Right ventricle myocardium inferior (tissue), 1 donor: ENCODE measurements at regions of chr20 and their contacts with region 1.

Region 1: GRCh38 chr20:53547664-53548239 is 45.9 kb downstream of the ZNF217 start:
- DNase-seq: no peak
- ATAC-seq: peak; percentile 28

Region 2: DNA sequence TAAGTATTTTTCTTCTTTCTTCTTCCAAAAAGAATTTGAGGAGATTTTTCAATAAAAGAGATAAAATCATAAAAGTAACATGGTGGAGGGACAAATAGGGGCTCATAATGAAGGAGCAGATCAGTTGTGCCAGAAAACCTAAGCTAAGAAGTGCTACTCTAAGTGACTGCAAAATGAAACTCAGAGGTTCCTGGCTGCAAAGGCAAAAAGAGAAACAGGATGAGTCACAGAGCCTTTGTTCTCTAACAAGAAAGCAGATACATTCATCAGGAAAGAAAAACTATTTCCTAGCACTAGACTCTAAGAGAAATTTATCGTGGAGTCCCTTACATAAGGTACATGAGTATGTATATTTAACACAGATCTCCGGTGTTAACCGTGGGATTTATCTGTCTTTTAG is 525.8 kb before region 1 on chr20:
- intact Hi-C with region 1: loop called (anchors 5 kb)
- DNase-seq: no peak
- ATAC-seq: no peak

Region 3: DNA sequence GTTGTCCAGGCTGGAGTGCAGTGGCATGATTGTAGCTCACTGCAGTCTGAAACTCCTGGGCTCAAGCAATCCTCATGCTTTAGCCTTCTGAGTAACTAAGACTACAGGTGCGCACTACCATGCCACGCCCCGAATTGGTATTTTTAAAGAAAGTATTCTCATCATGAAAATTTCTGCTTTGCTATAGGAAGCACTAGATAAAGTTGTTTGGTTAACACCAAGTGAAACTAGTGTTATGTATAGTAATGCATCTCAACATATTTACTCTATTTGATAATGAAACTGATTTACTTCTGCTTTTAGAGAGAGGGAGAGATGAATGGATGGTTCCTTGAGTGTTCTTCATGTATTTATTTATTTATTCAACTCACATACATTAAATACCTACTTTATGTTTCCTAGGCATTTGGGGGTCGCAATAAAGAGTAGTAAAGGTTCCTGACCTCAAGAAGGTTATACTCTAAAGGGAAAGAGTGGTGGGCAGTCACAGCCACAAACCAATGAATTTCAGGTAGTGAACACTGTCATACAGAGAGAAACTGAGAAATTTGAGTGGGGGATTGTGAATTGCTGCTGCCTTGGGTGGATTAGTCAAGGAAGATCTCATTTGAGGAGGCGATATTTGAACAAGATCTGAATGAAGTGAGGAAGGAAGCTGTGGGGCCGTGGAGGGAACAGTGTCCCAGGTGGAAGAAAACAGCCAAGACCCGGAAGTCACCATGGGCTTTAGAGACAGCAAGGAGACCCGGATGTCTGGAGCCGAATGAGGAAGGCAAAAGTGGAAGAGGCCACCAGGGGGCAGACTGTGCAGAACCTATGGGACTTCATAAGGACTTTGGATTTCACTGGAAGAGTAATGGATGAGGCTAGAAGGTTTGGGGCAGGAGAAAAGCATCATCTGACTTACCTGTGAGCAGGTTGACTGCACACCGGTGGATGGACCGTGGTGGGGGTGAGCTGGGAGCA is 390.0 kb before region 1 on chr20:
- intact Hi-C with region 1: loop called (anchors 10 kb)
- DNase-seq: no peak
- ATAC-seq: no peak

Region 4: GRCh38 chr20:53419693-53420460 is 127.9 kb before region 1 on chr20:
- intact Hi-C with region 1: no loop called
- DNase-seq: no peak
- ATAC-seq: no peak